ENCODE measurements at regions of chr2 and their contacts with region 1.

Region 1: DNA sequence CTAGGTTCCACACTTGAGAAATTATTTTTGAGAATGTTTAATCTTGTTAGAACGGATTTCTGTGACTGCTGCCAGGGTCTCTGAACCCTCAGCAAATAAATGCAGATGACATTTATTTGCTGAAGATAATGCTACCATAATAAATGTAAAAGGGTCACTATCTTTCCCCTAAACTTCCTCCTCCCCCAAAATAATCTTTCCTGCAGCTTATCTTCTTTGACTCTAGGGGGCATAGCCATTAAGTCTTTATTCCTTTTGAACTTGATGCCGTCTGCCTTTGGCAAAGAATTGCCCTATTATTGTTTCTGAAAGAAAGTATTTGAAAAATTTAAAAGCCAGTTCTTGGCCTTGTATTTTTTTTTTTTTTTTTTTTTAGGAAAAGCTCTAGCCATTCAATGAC is 63.6 kb upstream of the ACSL3 start:
- DNase-seq: no peak
- H3K4me3 Mint-ChIP-seq: no peak overlapping the region
- H3K27ac Mint-ChIP-seq: no peak overlapping the region
- H3K4me1 Mint-ChIP-seq: peaks cover 19% of the 10 kb centered on the region
- H3K27me3 Mint-ChIP-seq: no peaks in the 10 kb centered on the region
- CTCF ChIP-seq: peak; percentile 39

Region 2: DNA sequence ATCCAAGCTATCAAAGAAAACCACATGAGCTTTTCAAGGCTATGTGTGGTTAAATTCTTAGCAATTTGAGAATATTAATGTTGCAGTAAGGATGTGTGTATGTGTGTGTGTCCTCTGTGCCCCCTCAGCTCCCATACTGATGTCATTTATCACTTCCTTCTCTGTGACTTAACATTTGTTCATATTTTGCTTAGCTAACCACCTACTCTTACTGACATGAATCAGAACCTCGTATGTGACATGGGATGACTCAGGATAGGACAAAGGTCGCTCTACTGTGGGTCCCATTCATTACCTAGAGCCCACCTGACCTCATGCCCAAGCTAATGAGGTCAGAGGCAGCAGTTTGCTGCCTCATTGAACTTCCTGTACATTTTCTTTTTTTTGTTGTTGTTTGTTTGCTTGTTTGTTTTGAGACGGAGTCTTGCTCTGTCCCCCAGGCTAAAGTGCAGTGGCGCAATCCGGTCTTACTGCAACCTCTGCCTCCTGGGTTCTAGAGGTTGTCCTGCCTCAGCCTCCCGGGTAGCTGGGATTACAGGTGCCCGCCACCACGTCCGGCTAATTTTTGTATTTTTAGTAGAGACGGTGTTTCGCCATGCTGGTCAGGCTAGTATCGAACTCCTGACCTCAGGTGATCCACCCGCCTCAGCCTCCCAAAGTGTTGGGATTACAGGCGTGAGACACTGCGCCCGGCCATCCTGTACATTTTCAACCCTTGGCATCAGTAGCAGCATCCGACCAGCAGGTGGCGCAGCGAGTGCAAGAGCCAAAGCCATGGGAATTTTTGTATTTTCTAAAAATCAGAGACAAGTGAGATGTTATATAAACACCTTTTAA is 89.4 kb before region 1 on chr2:
- CTCF ChIA-PET with region 1: no interaction called
- intact Hi-C with region 1: no loop called
- DNase-seq: peak; percentile 80
- H3K4me3 Mint-ChIP-seq: peak overlapping the region; percentile 45
- H3K27ac Mint-ChIP-seq: peak overlapping the region; percentile 63
- H3K4me1 Mint-ChIP-seq: peaks cover 33% of the 10 kb centered on the region
- H3K27me3 Mint-ChIP-seq: no peaks in the 10 kb centered on the region
- CTCF ChIP-seq: peak; percentile 93

Region 3: GRCh38 chr2:222756951-222757650 is 40.2 kb before region 1 on chr2:
- CTCF ChIA-PET with region 1: no interaction called
- intact Hi-C with region 1: no loop called
- DNase-seq: no peak
- H3K4me3 Mint-ChIP-seq: no peak overlapping the region
- H3K27ac Mint-ChIP-seq: no peak overlapping the region
- H3K4me1 Mint-ChIP-seq: peaks cover 14% of the 10 kb centered on the region
- H3K27me3 Mint-ChIP-seq: no peaks in the 10 kb centered on the region
- CTCF ChIP-seq: no peak

Region 4: DNA sequence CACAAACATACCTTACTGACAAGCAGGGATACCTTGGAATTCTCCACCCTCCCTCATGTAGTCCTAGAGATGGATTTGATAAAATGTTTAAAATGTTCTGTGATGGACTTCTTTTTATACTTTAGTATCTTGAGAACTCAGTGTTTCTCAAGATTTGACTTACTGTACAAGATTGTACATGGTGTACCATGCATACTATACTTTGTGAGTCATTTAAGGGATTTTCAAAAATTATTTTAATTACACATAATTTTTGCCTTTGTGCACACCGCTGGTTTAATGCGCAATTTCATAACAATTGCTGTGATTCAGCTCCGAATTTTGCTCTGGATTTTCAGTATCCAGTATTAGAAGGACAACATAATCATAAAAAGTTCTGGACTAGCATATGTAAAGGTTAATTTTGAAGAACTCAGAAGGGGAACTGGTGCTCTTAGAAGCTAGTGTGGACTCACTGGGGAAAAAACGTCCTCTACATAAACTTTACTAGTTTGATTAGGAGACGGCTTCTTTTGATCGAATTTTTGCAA is 15.0 kb before region 1 on chr2:
- CTCF ChIA-PET with region 1: no interaction called
- intact Hi-C with region 1: no loop called
- DNase-seq: no peak
- H3K4me3 Mint-ChIP-seq: no peak overlapping the region
- H3K27ac Mint-ChIP-seq: no peak overlapping the region
- H3K4me1 Mint-ChIP-seq: no peaks in the 10 kb centered on the region
- H3K27me3 Mint-ChIP-seq: no peaks in the 10 kb centered on the region
- CTCF ChIP-seq: no peak

Region 5: GRCh38 chr2:222837511-222838056 is 40.3 kb after region 1 on chr2:
- CTCF ChIA-PET with region 1: no interaction called
- intact Hi-C with region 1: loop called (anchors 5 kb)
- DNase-seq: peak; percentile 21
- H3K4me3 Mint-ChIP-seq: peak overlapping the region; percentile 36
- H3K27ac Mint-ChIP-seq: peak overlapping the region; percentile 37
- H3K4me1 Mint-ChIP-seq: peaks cover 58% of the 10 kb centered on the region
- H3K27me3 Mint-ChIP-seq: no peaks in the 10 kb centered on the region
- CTCF ChIP-seq: no peak

Region 6: DNA sequence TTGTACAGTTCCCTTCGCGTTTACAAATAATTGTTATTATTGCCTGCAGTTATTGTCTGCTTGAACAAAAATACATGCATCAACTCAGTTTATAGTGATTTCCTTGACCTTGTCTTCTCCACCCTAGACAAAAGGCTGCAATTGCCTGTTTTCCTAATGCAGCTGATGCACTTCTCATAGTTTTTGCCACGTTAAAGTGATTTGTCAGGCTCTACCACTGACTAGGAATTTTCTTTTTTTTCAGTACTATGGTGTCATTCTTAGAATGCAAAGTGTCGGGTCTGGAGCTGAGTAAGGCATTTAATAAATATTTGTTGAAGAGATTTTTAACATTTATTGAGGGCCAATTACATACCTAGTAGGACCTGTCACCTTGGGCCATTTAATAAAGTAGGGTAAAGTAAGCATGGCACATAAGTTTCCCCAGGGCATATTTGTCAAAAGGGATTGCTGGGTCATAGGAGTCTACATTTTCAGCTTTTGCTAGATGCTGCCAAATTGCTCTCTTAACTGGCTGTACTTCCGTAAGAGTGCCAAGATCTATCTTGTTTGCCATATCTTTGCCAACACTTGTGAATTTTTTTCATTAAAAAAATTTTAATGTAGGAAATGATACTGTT is 87.7 kb after region 1 on chr2:
- CTCF ChIA-PET with region 1: no interaction called
- intact Hi-C with region 1: loop called (anchors 5 kb)
- DNase-seq: no peak
- H3K4me3 Mint-ChIP-seq: no peak overlapping the region
- H3K27ac Mint-ChIP-seq: no peak overlapping the region
- H3K4me1 Mint-ChIP-seq: peaks cover 24% of the 10 kb centered on the region
- H3K27me3 Mint-ChIP-seq: no peaks in the 10 kb centered on the region
- CTCF ChIP-seq: no peak

Region 7: GRCh38 chr2:222903234-222904220 is 106.3 kb after region 1 on chr2:
- CTCF ChIA-PET with region 1: interaction called, 9 read pairs
- intact Hi-C with region 1: loop called (anchors 1 kb)
- DNase-seq: peak; percentile 41
- H3K4me3 Mint-ChIP-seq: no peak overlapping the region
- H3K27ac Mint-ChIP-seq: no peak overlapping the region
- H3K4me1 Mint-ChIP-seq: peaks cover 89% of the 10 kb centered on the region
- H3K27me3 Mint-ChIP-seq: no peaks in the 10 kb centered on the region
- CTCF ChIP-seq: peak; percentile 46

Region 8: DNA sequence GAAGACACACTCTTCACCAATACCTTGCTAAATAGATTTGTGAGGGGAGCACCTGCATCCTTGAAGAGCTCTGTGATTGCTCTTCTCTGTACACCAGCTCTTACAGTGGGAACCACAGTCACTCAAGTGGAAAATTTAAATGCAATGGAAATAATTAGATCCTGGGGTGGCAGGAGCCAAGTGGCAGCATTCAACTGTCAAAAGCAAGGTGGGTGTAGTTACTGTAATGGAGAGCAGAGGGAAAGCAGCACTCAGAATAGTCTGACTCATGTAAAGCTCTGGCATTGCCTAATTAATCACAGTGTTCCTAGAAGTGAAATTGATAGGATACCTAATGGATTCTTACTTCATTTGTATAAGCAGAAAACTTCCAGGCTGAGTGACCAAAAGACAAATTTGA is 500.5 kb after region 1 on chr2:
- CTCF ChIA-PET with region 1: no interaction called
- intact Hi-C with region 1: no loop called
- DNase-seq: no peak
- H3K4me3 Mint-ChIP-seq: no peak overlapping the region
- H3K27ac Mint-ChIP-seq: no peak overlapping the region
- H3K4me1 Mint-ChIP-seq: peaks cover under 1% of the 10 kb centered on the region
- H3K27me3 Mint-ChIP-seq: no peaks in the 10 kb centered on the region
- CTCF ChIP-seq: no peak

Measured in Calu3 (cell line).